Activated B cell treated with CpG ODN at 0.5 μM for 24 hours (primary cell): ENCODE measurements at regions of chr21 and their contacts with region 1.

Region 1: DNA sequence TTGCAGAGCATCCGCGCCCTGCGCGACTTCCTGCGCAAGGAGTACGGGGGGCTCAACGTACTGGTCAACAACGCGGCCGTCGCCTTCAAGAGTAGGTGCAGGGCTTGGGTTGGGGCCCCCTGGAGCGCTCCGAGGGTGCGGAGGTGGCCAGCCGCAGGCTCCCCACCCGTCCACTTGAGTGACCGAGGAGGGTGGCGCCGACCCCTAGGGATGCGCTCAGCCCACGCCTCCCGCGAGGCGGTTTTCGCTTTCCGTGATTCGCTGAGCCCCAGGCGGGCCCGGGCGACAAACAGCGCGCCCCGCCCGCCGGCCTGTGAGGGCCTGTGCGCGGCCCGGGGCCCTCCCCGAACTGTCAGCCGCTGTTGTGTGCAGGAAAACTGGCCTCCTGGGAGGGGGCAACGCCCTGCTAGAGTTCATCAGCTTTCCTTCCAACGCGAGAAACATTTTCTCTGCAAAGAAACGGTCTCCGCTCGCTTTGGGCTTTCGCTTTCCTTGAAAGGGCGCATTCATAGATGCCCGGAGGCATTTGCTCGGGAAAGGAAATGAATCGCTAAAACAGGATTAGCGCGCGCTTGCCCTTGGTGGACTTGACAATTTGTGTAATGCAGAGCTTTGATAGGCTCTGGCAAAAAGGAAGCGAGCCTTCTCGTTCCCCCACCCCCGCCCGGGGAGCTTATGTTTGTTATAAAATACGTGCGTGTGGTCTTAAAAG is 668 bp downstream of the CBR3 start:
- DNase-seq: peak; percentile 64
- ATAC-seq: peak; percentile 82
- H3K4me3 Mint-ChIP-seq: peak overlapping the region; percentile 92
- H3K27ac Mint-ChIP-seq: peak overlapping the region; percentile 88
- H3K4me1 Mint-ChIP-seq: peaks cover 33% of the 10 kb centered on the region
- H3K27me3 Mint-ChIP-seq: no peaks in the 10 kb centered on the region
- CTCF ChIP-seq: no peak

Region 2: GRCh38 chr21:36060159-36060921 is 75.2 kb before region 1 on chr21 and contains the start of gene SETD4:
- CTCF ChIA-PET with region 1: no interaction called
- POLR2A ChIA-PET with region 1: interaction called, 9 read pairs
- intact Hi-C with region 1: loop called (anchors 1 kb)
- DNase-seq: peak; percentile 96
- ATAC-seq: peak; percentile 89
- H3K4me3 Mint-ChIP-seq: peak within 1 kb of the TSS; percentile 95
- H3K27ac Mint-ChIP-seq: peak within 1 kb of the TSS; percentile 96
- H3K4me1 Mint-ChIP-seq: peaks cover 20% of the 10 kb centered on the region
- H3K27me3 Mint-ChIP-seq: no peaks in the 10 kb centered on the region
- CTCF ChIP-seq: no peak
- total RNA-seq, gene SETD4: 31.6 and 40.4 TPM in 2 replicates

Region 3: DNA sequence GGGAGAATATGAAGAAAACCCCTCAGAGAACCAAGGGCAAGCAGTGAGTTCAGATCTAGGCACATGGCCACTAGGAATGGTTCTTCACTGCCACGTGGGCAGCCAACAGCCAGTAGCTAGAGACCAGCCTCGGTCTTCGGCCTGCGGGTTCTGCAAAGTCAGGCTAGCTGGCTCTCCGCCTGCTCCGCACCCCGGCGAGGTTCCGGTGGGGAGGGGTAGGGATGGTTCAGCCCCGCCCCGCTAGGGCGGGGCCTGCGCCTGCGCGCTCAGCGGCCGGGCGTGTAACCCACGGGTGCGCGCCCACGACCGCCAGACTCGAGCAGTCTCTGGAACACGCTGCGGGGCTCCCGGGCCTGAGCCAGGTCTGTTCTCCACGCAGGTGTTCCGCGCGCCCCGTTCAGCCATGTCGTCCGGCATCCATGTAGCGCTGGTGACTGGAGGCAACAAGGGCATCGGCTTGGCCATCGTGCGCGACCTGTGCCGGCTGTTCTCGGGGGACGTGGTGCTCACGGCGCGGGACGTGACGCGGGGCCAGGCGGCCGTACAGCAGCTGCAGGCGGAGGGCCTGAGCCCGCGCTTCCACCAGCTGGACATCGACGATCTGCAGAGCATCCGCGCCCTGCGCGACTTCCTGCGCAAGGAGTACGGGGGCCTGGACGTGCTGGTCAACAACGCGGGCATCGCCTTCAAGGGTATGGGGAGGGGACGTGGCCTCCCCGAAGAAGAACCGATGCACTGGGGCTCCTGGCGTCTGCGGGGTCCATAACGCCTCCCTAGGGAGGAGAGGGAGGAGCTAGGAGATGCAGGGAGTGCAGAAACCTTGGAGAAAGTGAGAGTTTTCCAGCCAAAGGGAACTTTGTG is 65.6 kb before region 1 on chr21 and contains the start of gene CBR1:
- CTCF ChIA-PET with region 1: no interaction called
- POLR2A ChIA-PET with region 1: interaction called, 4 read pairs
- intact Hi-C with region 1: loop called (anchors 2 kb)
- DNase-seq: peak; percentile 86
- ATAC-seq: peak; percentile 99
- H3K4me3 Mint-ChIP-seq: peak within 1 kb of the TSS; percentile 90
- H3K27ac Mint-ChIP-seq: peak within 1 kb of the TSS; percentile 87
- H3K4me1 Mint-ChIP-seq: peaks cover 31% of the 10 kb centered on the region
- H3K27me3 Mint-ChIP-seq: no peaks in the 10 kb centered on the region
- CTCF ChIP-seq: no peak
- total RNA-seq, gene CBR1: 17.5 and 20.3 TPM in 2 replicates

Region 4: DNA sequence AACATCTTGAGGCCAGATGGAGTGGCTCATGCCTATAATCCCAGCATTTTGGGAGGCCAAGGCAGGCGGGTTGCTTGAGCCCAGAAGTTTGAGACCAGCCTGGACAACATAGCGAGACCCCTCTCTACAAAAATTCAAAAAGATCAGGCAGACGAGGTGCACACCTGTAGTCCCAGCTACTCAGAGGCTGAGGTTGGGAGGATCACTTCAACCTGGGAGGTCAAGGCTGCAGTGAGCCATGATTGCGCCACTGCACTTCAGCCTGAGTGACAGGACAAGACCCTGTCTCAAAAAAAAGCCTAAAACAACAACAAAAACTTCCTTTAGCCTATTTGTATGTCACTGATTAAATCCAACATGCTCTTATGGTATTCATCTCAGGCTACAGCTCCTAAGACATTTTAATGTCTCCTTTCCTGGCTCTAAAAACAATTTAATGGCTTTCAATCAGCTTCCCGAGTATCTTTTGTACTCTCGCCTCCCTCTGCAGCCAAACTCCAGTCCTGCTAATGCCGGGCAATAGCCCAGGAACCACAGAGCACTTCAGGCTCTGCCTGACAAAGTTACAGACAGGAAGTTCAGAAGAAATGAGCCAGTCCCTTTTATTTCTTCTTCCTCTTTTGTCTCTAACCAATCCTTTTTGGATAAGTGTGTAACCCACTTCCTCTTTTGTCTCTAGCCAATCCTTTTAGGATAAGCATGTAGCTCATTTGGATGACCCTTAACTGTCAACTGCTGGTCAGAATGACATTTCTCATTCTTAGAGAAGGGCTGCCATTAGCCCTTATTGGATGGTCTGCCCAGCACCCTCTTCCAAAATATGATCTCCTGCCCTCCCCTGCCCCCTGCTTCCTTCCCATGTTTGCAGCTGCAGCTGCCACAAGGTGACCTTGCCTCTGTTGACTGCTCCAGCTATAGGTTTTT is 14.5 kb after region 1 on chr21:
- CTCF ChIA-PET with region 1: interaction called, 6 read pairs
- POLR2A ChIA-PET with region 1: interaction called, 22 read pairs
- intact Hi-C with region 1: no loop called
- DNase-seq: no peak
- ATAC-seq: peak; percentile 85
- H3K4me3 Mint-ChIP-seq: peak overlapping the region; percentile 55
- H3K27ac Mint-ChIP-seq: peak overlapping the region; percentile 97
- H3K4me1 Mint-ChIP-seq: peaks cover 36% of the 10 kb centered on the region
- H3K27me3 Mint-ChIP-seq: no peaks in the 10 kb centered on the region
- CTCF ChIP-seq: no peak

Region 5: GRCh38 chr21:36166705-36167104 is 31.2 kb after region 1 on chr21:
- CTCF ChIA-PET with region 1: no interaction called
- POLR2A ChIA-PET with region 1: no interaction called
- intact Hi-C with region 1: no loop called
- DNase-seq: no peak
- ATAC-seq: no peak
- H3K4me3 Mint-ChIP-seq: no peak overlapping the region
- H3K27ac Mint-ChIP-seq: no peak overlapping the region
- H3K4me1 Mint-ChIP-seq: peaks cover 29% of the 10 kb centered on the region
- H3K27me3 Mint-ChIP-seq: no peaks in the 10 kb centered on the region
- CTCF ChIP-seq: no peak

Region 6: GRCh38 chr21:36254106-36254941 is 118.8 kb after region 1 on chr21:
- CTCF ChIA-PET with region 1: no interaction called
- POLR2A ChIA-PET with region 1: interaction called, 10 read pairs
- intact Hi-C with region 1: no loop called
- DNase-seq: no peak
- ATAC-seq: peak; percentile 46
- H3K4me3 Mint-ChIP-seq: peak overlapping the region; percentile 84
- H3K27ac Mint-ChIP-seq: peak overlapping the region; percentile 88
- H3K4me1 Mint-ChIP-seq: peaks cover 69% of the 10 kb centered on the region
- H3K27me3 Mint-ChIP-seq: no peaks in the 10 kb centered on the region
- CTCF ChIP-seq: no peak

Region 7: GRCh38 chr21:36319765-36320420 is 184.3 kb after region 1 on chr21 and contains the start of gene MORC3:
- CTCF ChIA-PET with region 1: no interaction called
- POLR2A ChIA-PET with region 1: interaction called, 30 read pairs
- intact Hi-C with region 1: no loop called
- DNase-seq: peak; percentile 98
- ATAC-seq: peak; percentile 88
- H3K4me3 Mint-ChIP-seq: peak within 1 kb of the TSS; percentile 97
- H3K27ac Mint-ChIP-seq: peak within 1 kb of the TSS; percentile 97
- H3K4me1 Mint-ChIP-seq: peaks cover 50% of the 10 kb centered on the region
- H3K27me3 Mint-ChIP-seq: no peaks in the 10 kb centered on the region
- CTCF ChIP-seq: no peak
- total RNA-seq, gene MORC3: 55.4 and 65.6 TPM in 2 replicates

Region 8: DNA sequence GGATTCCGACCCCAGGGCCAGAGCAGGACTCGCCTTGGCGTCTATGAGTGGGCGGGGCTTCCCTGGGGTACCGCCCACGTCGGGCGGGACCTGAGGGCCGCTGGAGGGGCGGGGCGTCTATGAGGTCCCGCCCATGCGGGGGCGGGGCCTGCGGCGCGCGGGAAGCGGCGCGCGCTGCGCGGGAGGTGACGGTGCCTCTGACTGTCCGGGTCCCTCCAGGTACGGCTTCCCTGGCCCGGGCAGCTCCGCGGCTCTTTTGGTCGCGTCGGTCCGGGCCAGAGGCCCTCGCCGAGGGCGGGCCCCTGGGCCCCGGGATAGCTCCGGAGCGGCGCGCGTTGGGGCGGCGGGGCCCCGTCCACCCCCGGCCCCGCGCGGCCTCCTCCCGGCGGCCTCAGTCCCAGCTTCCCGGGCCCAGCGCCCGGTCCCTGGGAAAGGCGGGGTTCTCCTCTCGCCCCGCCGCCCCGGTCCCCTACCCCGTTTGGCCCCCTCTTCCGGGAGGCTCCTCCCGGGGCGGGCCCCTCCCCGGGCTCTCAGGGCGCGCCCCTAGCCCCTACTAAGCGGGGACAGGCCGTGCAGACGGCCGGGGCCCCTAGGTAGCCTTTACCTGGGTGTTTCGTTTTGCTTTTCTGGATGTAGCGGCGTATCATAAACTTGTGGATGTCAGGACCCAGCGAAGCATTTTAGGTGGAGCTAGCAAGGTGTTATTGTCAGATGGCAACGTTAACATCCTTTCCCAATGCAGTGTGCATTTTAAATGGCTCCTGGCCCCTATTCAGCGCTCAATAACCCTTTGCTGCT is 249.9 kb after region 1 on chr21 and contains the start of gene CHAF1B:
- CTCF ChIA-PET with region 1: no interaction called
- POLR2A ChIA-PET with region 1: interaction called, 3 read pairs
- intact Hi-C with region 1: loop called (anchors 1 kb)
- DNase-seq: peak; percentile 88
- ATAC-seq: peak; percentile 97
- H3K4me3 Mint-ChIP-seq: peak within 1 kb of the TSS; percentile 83
- H3K27ac Mint-ChIP-seq: no peak within 1 kb of the TSS
- H3K4me1 Mint-ChIP-seq: peaks cover 6% of the 10 kb centered on the region
- H3K27me3 Mint-ChIP-seq: no peaks in the 10 kb centered on the region
- CTCF ChIP-seq: no peak
- total RNA-seq, gene CHAF1B: 5.6 and 6.2 TPM in 2 replicates